Naive thymus-derived CD4-positive, alpha-beta T cell (primary cell): ENCODE measurements at regions of chr9 and their contacts with region 1.

Region 1: GRCh38 chr9:15182101-15182551 is 124.9 kb downstream of the TTC39B start:
- DNase-seq: no peak
- ATAC-seq: no peak
- H3K4me3 ChIP-seq: no peak overlapping the region
- H3K4me3 Mint-ChIP-seq: no peak overlapping the region
- H3K27ac ChIP-seq: no peak overlapping the region
- H3K27ac Mint-ChIP-seq: no peak overlapping the region
- H3K4me1 ChIP-seq: no peaks in the 10 kb centered on the region
- H3K4me1 Mint-ChIP-seq: peaks cover 0 to 8% (median 0%) of the 10 kb centered on the region in 7 donors
- H3K27me3 ChIP-seq: no peaks in the 10 kb centered on the region
- H3K27me3 Mint-ChIP-seq: no peaks in the 10 kb centered on the region

Region 2: DNA sequence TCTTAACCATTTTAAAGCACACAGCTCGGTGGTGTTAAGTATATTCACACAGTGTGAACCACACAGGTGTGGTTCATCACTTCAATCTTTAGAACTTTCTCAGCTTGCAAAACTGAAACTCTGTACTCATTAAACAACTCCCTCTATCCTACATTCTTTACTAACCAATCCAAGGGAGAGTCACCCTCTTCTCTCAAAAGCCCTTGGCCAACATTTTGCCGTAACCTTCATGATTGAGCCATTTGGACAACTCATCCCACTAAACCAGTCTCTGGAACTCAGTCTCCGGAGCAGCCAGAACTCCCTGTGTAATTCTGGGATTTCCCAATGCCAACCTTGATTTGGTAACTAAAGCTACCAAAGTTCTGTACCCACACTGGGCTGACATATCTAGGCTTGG is 40.2 kb after region 1 on chr9:
- CTCF ChIA-PET with region 1: no interaction called
- POLR2A ChIA-PET with region 1: no interaction called
- intact Hi-C with region 1: loop called in 1 of 2 experiments (anchors 5 kb)
- DNase-seq: no peak
- ATAC-seq: no peak
- H3K4me3 ChIP-seq: no peak overlapping the region
- H3K4me3 Mint-ChIP-seq: no peak overlapping the region
- H3K27ac ChIP-seq: no peak overlapping the region
- H3K27ac Mint-ChIP-seq: peak overlapping the region in 4 of 9 donors; percentile 14 to 76 (median 50)
- H3K4me1 ChIP-seq: peaks cover 0 to 4% of the 10 kb centered on the region in 2 donors
- H3K4me1 Mint-ChIP-seq: peaks cover 13 to 41% (median 28%) of the 10 kb centered on the region in 7 donors
- H3K27me3 ChIP-seq: no peaks in the 10 kb centered on the region
- H3K27me3 Mint-ChIP-seq: no peaks in the 10 kb centered on the region